ENCODE measurements at regions of chr5 and their contacts with region 1.

Region 1: DNA sequence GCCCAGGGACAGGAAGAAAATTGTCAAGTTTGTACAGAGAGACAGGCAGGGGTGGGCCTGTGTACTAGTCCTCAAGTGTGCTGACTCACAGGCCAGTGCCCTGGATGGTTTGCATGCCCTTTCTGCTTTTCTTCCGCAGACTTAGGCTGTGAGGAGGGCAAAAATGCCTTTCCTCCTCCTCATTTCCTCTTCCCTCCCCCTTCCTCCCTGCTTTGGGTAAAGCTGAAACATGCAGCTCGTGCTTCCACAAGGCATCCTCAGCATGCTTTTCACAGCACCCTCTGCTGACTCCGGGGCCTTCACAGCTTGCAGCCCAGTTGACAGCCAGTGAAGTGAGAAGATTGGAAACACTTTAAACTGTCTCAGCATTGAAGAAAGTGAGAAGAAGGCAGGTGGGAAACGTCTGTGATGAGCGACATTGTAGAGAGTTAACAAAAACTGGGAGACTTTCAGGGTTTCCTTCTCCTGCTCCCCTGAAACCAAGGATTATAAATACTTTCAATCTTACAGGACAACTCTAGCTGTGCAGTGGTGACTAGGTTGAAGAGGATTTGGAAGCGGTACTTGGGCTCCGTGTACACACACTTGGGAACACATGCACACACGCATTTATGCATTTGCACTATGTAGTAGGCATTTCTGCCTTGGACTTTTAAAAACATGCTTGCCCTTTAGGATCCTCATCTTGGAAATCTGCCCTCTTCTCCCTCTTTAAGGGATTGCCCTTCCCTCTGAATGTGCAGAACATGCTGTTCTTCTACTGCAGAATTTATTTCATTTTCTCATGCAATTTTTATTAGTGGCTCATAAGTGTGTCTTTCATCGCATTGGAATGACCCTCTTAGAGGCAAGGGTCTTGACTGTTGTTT is 138.8 kb downstream of the GRIA1 start:
- DNase-seq: peak; percentile 66
- H3K4me3 ChIP-seq: no peak overlapping the region
- CTCF ChIP-seq: peak; percentile 65

Region 2: DNA sequence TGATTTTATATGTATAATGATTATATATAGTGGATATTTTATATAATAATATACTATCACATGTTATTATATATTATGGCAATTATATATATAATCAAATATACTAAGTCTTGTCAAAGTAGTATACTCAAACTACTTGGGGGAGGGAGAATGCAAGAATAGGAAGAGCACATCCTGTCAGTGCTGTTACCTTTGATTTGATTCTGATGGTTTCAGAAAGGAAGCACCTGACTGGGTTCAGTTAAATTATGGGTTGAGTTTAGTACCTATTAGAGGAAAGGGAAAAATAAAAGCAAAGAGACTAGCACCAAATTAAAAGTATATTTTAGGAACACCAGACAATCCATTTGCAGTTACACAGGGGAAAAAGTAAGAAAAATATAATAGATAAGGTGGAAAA is 31.2 kb before region 1 on chr5:
- in situ Hi-C with region 1: no loop called
- DNase-seq: no peak
- H3K4me3 ChIP-seq: no peak overlapping the region
- CTCF ChIP-seq: no peak

Region 3: GRCh38 chr5:153678617-153679329 is 49.5 kb after region 1 on chr5:
- in situ Hi-C with region 1: loop called (anchors 10 kb)
- DNase-seq: no peak
- H3K4me3 ChIP-seq: no peak overlapping the region
- CTCF ChIP-seq: no peak

Measured in astrocyte of the cerebellum (primary cell).